ENCODE measurements at regions of chr9 and their contacts with region 1.

Region 1: GRCh38 chr9:15485836-15486666 is 24.7 kb downstream of the PSIP1 start:
- DNase-seq: peak in 3 of 14 experiments; percentile 33 to 54 (median 50)
- ATAC-seq: peak; percentile 70
- H3K4me3 ChIP-seq: no peak overlapping the region
- H3K4me3 Mint-ChIP-seq: no peak overlapping the region
- H3K27ac ChIP-seq: no peak overlapping the region
- H3K27ac Mint-ChIP-seq: peak overlapping the region; percentile 24
- H3K4me1 ChIP-seq: no peaks in the 10 kb centered on the region
- H3K4me1 Mint-ChIP-seq: peaks cover 49% of the 10 kb centered on the region
- H3K27me3 ChIP-seq: no peaks in the 10 kb centered on the region
- H3K27me3 Mint-ChIP-seq: no peaks in the 10 kb centered on the region
- CTCF ChIP-seq: peak; percentile 61

Region 2: DNA sequence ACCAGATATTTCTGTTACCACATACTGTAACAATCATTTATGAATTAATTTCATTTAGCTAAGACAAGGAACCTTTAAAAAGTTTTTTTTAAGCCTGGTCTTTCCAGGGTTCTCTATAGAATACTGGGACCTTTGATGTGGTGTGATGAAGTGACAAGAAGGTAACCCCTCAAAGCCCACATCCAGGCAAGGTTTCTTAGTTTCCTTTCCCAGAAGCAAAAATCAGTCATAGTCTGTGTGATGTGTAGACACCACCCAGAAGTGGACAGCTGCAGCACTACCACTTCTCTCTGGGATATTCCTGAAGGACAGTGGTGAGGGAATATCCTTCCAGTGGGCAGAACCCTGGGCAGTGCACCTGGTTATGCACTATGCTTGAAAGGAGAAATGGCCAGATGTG is 294.7 kb before region 1 on chr9:
- CTCF ChIA-PET with region 1: no interaction called
- POLR2A ChIA-PET with region 1: no interaction called
- intact Hi-C with region 1: no loop called
- DNase-seq: peak in 1 of 14 experiments; percentile 7
- ATAC-seq: no peak
- H3K4me3 ChIP-seq: no peak overlapping the region
- H3K4me3 Mint-ChIP-seq: no peak overlapping the region
- H3K27ac ChIP-seq: no peak overlapping the region
- H3K27ac Mint-ChIP-seq: no peak overlapping the region
- H3K4me1 ChIP-seq: no peaks in the 10 kb centered on the region
- H3K4me1 Mint-ChIP-seq: peaks cover 10% of the 10 kb centered on the region
- H3K27me3 ChIP-seq: no peaks in the 10 kb centered on the region
- H3K27me3 Mint-ChIP-seq: no peaks in the 10 kb centered on the region
- CTCF ChIP-seq: no peak

Region 3: GRCh38 chr9:15357050-15357653 is 128.9 kb before region 1 on chr9:
- CTCF ChIA-PET with region 1: no interaction called
- POLR2A ChIA-PET with region 1: no interaction called
- intact Hi-C with region 1: loop called (anchors 2 to 5 kb)
- DNase-seq: peak in 13 of 14 experiments; percentile 14 to 76 (median 36)
- ATAC-seq: peak; percentile 84
- H3K4me3 ChIP-seq: no peak overlapping the region
- H3K4me3 Mint-ChIP-seq: no peak overlapping the region
- H3K27ac ChIP-seq: no peak overlapping the region
- H3K27ac Mint-ChIP-seq: peak overlapping the region; percentile 10
- H3K4me1 ChIP-seq: peaks cover 4% of the 10 kb centered on the region
- H3K4me1 Mint-ChIP-seq: peaks cover 23% of the 10 kb centered on the region
- H3K27me3 ChIP-seq: no peaks in the 10 kb centered on the region
- H3K27me3 Mint-ChIP-seq: no peaks in the 10 kb centered on the region
- CTCF ChIP-seq: no peak

Region 4: GRCh38 chr9:15469406-15469805 is 16.6 kb before region 1 on chr9:
- CTCF ChIA-PET with region 1: no interaction called
- POLR2A ChIA-PET with region 1: no interaction called
- intact Hi-C with region 1: loop called in 1 of 2 experiments (anchors 2 kb)
- DNase-seq: no peak
- ATAC-seq: no peak
- H3K4me3 ChIP-seq: no peak overlapping the region
- H3K4me3 Mint-ChIP-seq: no peak overlapping the region
- H3K27ac ChIP-seq: no peak overlapping the region
- H3K27ac Mint-ChIP-seq: peak overlapping the region; percentile 6
- H3K4me1 ChIP-seq: no peaks in the 10 kb centered on the region
- H3K4me1 Mint-ChIP-seq: peaks cover 7% of the 10 kb centered on the region
- H3K27me3 ChIP-seq: no peaks in the 10 kb centered on the region
- H3K27me3 Mint-ChIP-seq: no peaks in the 10 kb centered on the region
- CTCF ChIP-seq: no peak